Caco-2 (cell line): ENCODE measurements at regions of chr1 and their contacts with region 1.

Region 1: GRCh38 chr1:33055210-33056008 is 18.7 kb upstream of the AK2 start:
- DNase-seq: peak; percentile 74 to 79
- H3K4me3 ChIP-seq: no peak overlapping the region
- H3K4me3 Mint-ChIP-seq: no peak overlapping the region
- H3K27ac Mint-ChIP-seq: no peak overlapping the region
- H3K4me1 ChIP-seq: no peaks in the 10 kb centered on the region
- H3K4me1 Mint-ChIP-seq: peaks cover 8% of the 10 kb centered on the region
- H3K27me3 ChIP-seq: no peaks in the 10 kb centered on the region
- H3K27me3 Mint-ChIP-seq: no peaks in the 10 kb centered on the region
- CTCF ChIP-seq: peak; percentile 56 to 57

Region 2: DNA sequence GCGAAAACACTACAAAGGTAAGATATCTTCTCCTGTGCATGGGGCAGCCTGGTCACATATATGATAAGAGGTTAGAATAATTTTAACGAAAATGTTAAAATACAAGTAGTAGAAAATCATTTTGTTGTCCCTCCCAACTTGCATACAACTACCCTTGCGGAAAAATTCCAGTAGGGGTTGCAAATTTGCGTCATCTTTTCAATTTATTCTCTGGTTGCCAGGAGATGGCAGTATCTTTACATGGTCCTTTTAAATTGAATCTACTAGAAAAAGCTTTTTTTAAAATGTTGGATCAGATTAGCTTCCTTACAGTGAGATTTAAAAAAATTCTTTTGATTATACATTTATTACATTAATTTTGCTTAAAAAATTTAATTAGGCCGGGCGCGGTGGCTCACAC is 227.1 kb before region 1 on chr1:
- CTCF ChIA-PET with region 1: no interaction called
- POLR2A ChIA-PET with region 1: no interaction called
- intact Hi-C with region 1: no loop called
- DNase-seq: no peak
- H3K4me3 ChIP-seq: no peak overlapping the region
- H3K4me3 Mint-ChIP-seq: no peak overlapping the region
- H3K27ac Mint-ChIP-seq: no peak overlapping the region
- H3K4me1 ChIP-seq: no peaks in the 10 kb centered on the region
- H3K4me1 Mint-ChIP-seq: no peaks in the 10 kb centered on the region
- H3K27me3 ChIP-seq: no peaks in the 10 kb centered on the region
- H3K27me3 Mint-ChIP-seq: no peaks in the 10 kb centered on the region
- CTCF ChIP-seq: peak in 1 of 2 experiments; percentile 16

Region 3: DNA sequence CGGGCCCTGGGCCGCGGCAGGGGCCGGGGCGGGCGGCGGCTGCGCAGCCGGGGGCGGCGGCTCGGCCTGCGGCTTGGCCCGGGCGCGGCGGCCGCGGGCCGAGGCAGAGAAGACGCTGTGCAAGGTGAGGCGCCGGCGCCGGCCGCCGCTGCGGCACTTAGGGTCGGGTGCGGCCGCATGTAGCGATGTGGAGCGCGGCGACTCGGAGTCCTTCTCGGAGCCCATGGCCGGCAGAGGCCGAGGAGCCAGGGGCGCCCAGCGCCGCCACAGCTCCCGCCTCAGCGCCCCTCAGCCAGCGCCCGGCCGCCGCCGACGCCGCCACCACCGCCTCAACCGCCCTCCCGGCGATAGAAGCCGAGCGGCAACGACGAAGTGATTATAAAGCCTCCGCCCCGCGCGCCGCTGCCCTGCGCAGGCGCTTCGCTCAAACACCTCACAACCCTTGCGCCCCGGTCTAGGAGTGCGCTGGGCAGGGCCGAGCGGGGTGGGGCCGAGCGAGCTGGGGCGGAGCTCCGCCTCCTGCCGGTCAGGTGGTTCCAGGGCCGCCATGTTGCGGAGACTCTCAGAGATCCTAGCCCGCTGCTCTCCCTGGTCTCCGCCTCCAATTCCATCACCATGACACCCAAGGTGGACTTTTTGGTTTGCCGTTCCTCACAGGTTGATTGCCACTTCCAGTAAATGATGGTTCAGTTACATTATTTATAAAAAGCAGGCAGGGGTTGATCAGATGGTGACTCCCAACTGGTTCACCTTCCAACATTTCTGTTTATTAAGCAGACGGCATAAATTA is 90.8 kb before region 1 on chr1 and contains the start of gene RNF19B:
- CTCF ChIA-PET with region 1: no interaction called
- POLR2A ChIA-PET with region 1: no interaction called
- intact Hi-C with region 1: no loop called
- DNase-seq: peak; percentile 93 to 94
- H3K4me3 ChIP-seq: peak within 1 kb of the TSS; percentile 74
- H3K4me3 Mint-ChIP-seq: peak within 1 kb of the TSS; percentile 81
- H3K27ac Mint-ChIP-seq: no peak within 1 kb of the TSS
- H3K4me1 ChIP-seq: 0 out of 2 replicates have a peak, but pooled peaks cover 10% of the 10 kb centered on the region
- H3K4me1 Mint-ChIP-seq: peaks cover 13% of the 10 kb centered on the region
- H3K27me3 ChIP-seq: no peaks in the 10 kb centered on the region
- H3K27me3 Mint-ChIP-seq: peaks cover 7% of the 10 kb centered on the region
- CTCF ChIP-seq: no peak
- total RNA-seq, gene RNF19B: 13.9 and 14.5 TPM in 2 replicates

Region 4: GRCh38 chr1:33014464-33015163 is 40.8 kb before region 1 on chr1:
- CTCF ChIA-PET with region 1: interaction called, 4 read pairs
- POLR2A ChIA-PET with region 1: no interaction called
- intact Hi-C with region 1: loop called (anchors 2 kb)
- DNase-seq: no peak
- H3K4me3 ChIP-seq: no peak overlapping the region
- H3K4me3 Mint-ChIP-seq: no peak overlapping the region
- H3K27ac Mint-ChIP-seq: no peak overlapping the region
- H3K4me1 ChIP-seq: peaks cover 9% of the 10 kb centered on the region; the same call in 1 of the 2 replicates
- H3K4me1 Mint-ChIP-seq: peaks cover 8% of the 10 kb centered on the region
- H3K27me3 ChIP-seq: no peaks in the 10 kb centered on the region
- H3K27me3 Mint-ChIP-seq: no peaks in the 10 kb centered on the region
- CTCF ChIP-seq: no peak

Region 5: DNA sequence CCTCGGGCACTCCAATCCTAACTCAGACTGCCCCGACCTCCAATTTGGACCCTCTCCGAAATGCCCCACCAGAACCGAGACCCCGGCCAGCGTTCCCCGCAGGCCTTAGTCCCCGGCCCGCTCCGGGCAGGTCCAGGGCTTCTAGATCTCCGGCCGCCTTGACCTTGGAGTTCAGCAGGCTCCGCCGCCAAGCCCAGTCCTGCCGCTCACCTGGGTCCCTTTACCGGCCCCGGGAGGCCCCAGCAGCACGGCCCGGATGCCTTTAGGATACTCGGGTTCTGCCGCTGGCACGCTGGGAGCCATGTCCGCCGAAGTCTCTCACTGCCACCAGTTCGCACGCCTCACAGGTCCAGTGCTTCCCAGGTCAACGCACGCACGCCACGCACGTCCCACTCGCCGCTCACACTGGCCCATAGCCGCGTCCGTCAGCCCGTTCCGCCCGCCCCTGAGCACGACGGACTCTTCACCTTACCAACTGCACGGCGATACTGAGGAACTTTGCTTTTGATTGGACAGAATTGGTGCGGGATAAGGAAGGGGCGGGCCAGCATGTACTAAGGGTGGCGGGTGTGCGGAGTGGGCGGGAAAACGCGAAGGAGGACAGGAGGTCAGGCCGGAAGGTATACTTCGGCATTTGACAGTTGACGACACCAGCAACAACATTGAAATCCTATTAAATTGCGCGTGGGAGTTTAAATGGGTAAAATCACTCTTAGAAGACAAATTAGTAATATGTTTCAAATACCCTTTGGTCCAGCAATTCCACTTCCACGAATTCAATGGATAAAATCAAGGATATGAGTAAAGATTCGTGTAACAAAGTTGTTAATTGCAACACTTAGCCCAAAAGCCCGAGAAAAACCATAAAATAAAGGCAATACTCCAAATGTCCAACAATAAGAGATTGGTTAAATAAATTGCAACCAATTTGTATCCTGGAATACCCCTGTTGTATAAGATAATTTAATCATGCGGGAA is 18.6 kb before region 1 on chr1 and contains the start of gene AK2:
- CTCF ChIA-PET with region 1: no interaction called
- POLR2A ChIA-PET with region 1: no interaction called
- intact Hi-C with region 1: loop called (anchors 1 kb)
- DNase-seq: peak; percentile 93 to 96
- H3K4me3 ChIP-seq: peak within 1 kb of the TSS; percentile 71
- H3K4me3 Mint-ChIP-seq: peak within 1 kb of the TSS; percentile 96
- H3K27ac Mint-ChIP-seq: peak within 1 kb of the TSS; percentile 98
- H3K4me1 ChIP-seq: peaks cover 16% of the 10 kb centered on the region
- H3K4me1 Mint-ChIP-seq: peaks cover 13% of the 10 kb centered on the region
- H3K27me3 ChIP-seq: no peaks in the 10 kb centered on the region
- H3K27me3 Mint-ChIP-seq: no peaks in the 10 kb centered on the region
- CTCF ChIP-seq: no peak
- total RNA-seq, gene AK2: 127 and 139 TPM in 2 replicates

Region 6: DNA sequence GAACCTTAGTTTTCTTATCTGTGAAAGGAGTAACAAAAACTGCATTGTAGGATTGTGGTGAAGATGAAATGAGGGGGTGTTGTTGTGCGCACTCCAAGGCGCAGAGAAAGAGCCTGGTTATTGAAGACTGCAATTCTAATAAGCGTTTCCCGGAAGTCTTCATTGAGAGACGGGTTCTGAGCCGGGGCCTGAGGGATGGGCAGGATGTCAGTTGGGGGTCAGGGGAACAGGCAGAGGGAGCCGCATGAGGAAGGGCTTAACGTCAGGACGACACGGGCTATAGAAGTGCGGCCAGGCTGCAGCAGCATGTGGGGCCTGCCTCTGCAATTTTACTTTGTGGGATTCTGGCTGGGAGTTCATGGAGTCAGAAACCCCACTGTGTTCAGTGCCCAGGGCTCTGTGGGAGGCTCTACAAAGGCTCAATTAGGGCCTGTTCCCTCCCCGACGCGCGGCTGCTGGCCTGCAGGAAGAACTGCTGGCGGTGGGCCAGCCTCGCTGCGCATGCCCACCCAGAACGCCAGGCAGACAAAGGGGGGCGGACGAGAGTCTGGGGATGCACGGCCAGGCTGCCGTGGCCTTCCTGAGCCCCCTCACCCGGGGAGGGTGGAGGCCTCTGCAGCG is 105.8 kb after region 1 on chr1:
- CTCF ChIA-PET with region 1: no interaction called
- POLR2A ChIA-PET with region 1: no interaction called
- intact Hi-C with region 1: no loop called
- DNase-seq: no peak
- H3K4me3 ChIP-seq: no peak overlapping the region
- H3K4me3 Mint-ChIP-seq: no peak overlapping the region
- H3K27ac Mint-ChIP-seq: no peak overlapping the region
- H3K4me1 ChIP-seq: no peaks in the 10 kb centered on the region
- H3K4me1 Mint-ChIP-seq: no peaks in the 10 kb centered on the region
- H3K27me3 ChIP-seq: no peaks in the 10 kb centered on the region
- H3K27me3 Mint-ChIP-seq: no peaks in the 10 kb centered on the region
- CTCF ChIP-seq: no peak

Region 7: DNA sequence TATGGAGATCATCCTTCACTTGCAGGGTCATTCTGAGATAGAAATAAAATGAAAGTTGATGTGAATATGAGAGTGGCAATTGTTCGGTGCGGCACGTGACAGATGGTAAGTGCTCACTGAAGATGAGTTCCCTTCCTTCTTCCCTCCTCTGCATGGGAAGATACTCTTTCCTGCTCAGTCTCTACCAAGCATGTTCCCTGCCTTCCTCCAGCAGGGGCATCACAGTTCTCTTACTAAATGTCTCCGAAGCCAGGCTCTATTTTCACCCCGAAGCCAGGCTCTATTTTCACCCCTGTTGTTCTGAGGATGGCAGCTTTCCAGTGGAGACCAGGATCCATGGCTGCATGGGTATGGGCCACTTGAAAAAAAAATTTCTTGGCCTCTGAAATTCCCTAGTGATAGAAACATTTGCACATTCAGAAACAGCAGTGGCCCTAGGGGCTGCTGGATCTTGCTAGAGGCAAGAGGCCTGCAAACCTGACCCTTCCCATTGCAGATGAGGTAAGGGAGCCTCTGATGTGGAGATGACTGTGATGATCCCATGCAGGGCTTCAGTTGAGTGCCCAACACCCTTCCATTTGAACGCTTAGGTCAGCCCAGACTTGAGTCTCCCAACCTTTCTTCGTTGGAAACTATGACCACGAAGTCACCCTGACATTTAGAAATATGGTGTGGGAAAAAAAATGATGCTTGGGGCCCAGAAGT is 684.8 kb after region 1 on chr1:
- CTCF ChIA-PET with region 1: no interaction called
- POLR2A ChIA-PET with region 1: no interaction called
- intact Hi-C with region 1: no loop called
- DNase-seq: no peak
- H3K4me3 ChIP-seq: no peak overlapping the region
- H3K4me3 Mint-ChIP-seq: no peak overlapping the region
- H3K27ac Mint-ChIP-seq: no peak overlapping the region
- H3K4me1 ChIP-seq: no peaks in the 10 kb centered on the region
- H3K4me1 Mint-ChIP-seq: no peaks in the 10 kb centered on the region
- H3K27me3 ChIP-seq: no peaks in the 10 kb centered on the region
- H3K27me3 Mint-ChIP-seq: peaks cover 11% of the 10 kb centered on the region
- CTCF ChIP-seq: no peak